ENCODE measurements at regions of chr5 and their contacts with region 1.

Region 1: DNA sequence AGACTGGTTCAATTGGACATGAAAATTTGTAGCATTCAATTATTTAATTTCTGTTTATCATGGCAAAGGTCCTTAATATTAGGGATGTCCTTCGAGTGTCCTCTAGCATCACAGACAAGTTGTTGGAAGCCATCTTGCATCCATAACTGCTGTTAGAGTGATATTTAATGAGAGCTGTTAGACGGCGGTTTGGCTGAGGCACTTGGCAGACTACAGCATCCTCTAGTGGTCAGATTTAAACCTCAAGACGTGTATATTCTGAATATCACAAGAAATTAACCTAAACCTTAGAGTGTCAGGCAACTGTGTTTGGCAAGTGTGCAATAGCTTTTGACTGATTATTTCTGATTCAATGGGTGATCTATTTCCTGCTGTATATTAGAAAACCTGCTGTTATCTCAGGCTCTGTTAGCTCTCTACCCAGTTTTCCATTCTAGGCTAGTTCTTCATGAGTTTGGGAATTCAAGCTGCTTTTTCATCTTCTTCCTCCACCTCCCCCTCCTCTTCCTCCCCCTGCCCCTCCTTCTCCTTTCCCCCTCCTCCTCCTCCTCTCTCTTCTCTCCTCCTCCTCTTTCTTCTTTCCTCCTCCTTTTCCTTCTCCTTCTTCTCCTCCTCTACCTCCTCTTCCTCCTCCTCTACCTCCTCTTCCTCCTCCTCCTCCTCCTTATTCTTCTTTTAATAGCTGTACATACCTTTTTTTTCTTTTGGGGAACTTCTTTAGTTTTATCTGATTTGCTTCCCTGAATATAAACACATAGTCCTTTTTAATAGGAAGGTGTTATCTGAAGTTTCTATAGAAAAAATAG is 8.6 kb downstream of the SPINK1 start:
- DNase-seq: peak; percentile 19
- H3K4me3 Mint-ChIP-seq: no peak overlapping the region
- H3K27ac Mint-ChIP-seq: no peak overlapping the region
- H3K4me1 Mint-ChIP-seq: no peaks in the 10 kb centered on the region
- H3K27me3 Mint-ChIP-seq: peaks cover 4% of the 10 kb centered on the region

Region 2: DNA sequence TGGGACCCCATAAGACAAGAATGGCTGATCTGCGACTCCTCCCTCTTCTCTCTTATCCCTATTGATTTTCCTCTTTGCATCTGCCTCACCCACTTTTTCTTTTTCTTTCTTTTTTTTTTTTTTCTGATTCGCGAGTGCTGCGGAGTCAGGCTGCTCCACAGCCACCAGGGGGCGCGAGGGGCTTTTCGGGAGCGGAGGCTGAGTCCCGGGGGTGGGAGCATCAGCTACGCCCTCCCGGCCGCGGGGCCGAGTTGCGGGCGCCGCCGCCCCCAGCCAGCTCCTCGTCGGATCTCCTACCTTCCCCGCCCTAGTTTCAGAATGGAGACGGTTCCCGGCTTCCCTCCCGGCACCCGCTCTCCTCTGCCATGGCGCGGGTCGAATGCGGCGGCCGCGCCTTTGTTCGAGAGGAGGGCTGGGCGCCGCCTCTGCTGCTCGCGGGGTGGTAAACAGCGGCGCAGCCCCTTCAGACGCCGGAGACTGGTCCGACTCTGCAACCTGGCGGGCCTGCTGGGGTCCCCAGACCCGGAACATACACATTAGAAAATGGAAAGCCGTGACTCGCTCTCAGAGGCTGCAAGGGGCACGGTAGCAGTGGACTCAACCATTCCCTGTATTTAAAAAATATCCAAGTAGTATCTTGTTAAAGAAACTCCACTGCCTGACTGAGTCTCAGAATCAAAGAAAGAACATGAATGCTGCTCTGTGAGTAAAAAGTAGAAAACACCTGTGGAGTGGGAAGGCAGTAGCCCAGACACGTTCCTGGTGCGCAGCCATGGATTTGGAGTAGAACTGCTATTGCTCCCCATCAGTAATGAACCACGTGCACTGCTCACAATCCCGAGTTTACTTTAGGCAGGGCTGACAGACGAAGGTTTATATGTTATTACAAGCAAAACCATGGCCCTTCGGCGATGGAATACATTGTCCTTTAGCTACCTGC is 368.7 kb before region 1 on chr5:
- CTCF ChIA-PET with region 1: no interaction called
- POLR2A ChIA-PET with region 1: no interaction called
- intact Hi-C with region 1: loop called (anchors 10 kb)
- DNase-seq: peak; percentile 68
- H3K4me3 Mint-ChIP-seq: peak overlapping the region; percentile 72
- H3K27ac Mint-ChIP-seq: no peak overlapping the region
- H3K4me1 Mint-ChIP-seq: peaks cover 9% of the 10 kb centered on the region
- H3K27me3 Mint-ChIP-seq: peaks cover 65% of the 10 kb centered on the region

Region 3: DNA sequence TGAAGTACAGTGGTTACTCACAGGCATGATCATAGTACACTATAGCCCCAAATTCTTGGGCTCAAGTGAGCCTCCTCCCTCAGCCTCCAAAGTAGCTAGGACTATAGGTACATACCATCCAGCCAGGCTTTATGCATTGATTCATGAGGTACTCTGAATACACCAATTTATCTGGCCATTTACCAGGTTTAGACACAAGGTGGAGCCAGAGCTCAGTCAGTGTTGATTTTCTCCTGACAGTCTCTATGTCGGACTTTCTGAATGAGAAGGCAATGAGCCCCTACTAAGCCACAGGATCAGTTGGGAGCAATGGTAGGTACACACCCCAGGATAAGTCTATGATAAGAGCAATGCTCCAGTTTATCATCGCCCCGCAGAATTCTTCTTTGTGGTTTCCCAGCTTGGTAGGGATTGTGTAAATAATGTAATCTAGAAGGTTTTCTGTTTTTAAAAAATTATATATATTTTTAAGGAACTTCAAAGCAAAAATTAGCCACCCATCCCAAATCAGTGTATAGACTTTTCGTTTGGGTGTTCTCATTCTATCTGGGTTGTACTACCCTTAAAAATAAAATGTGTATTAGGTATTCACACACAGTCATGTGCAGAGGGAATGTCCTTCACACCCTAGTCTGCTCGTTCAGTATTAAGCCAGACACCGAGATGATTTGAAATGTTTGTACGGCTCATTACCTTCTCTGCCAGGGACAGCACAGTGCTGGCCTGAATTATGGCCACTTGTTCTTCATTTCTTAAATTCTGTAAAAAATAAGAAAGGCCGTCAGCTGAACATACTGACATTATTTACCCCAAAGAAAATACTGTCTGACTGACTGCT is 194.6 kb before region 1 on chr5:
- CTCF ChIA-PET with region 1: interaction called, 39 read pairs
- POLR2A ChIA-PET with region 1: no interaction called
- intact Hi-C with region 1: no loop called
- DNase-seq: peak; percentile 33
- H3K4me3 Mint-ChIP-seq: no peak overlapping the region
- H3K27ac Mint-ChIP-seq: no peak overlapping the region
- H3K4me1 Mint-ChIP-seq: no peaks in the 10 kb centered on the region
- H3K27me3 Mint-ChIP-seq: no peaks in the 10 kb centered on the region

Region 4: DNA sequence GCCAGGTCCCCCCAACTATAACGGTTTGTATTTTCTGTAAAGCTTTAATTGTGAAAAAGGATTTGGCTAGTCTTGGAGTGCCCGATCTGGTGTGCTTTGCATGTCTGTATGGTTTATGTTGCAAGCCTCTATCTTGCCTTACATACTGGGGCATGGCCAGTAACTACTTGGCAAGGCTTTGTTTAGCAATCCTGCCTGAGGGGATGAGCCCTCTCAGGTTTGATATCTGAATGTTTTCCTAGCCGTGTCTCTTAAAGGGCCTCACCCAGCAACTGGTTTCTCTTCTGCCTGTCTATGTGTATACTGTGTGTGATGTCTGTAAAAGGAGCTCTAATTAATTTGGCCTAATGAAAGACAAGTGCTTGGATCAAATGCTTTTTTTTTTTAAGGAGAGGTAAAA is 179.6 kb after region 1 on chr5:
- CTCF ChIA-PET with region 1: no interaction called
- POLR2A ChIA-PET with region 1: no interaction called
- intact Hi-C with region 1: no loop called
- DNase-seq: no peak
- H3K4me3 Mint-ChIP-seq: no peak overlapping the region
- H3K27ac Mint-ChIP-seq: no peak overlapping the region
- H3K4me1 Mint-ChIP-seq: no peaks in the 10 kb centered on the region
- H3K27me3 Mint-ChIP-seq: no peaks in the 10 kb centered on the region